MCF 10A (cell line): ENCODE measurements at regions of chr12 and their contacts with region 1.

Region 1: DNA sequence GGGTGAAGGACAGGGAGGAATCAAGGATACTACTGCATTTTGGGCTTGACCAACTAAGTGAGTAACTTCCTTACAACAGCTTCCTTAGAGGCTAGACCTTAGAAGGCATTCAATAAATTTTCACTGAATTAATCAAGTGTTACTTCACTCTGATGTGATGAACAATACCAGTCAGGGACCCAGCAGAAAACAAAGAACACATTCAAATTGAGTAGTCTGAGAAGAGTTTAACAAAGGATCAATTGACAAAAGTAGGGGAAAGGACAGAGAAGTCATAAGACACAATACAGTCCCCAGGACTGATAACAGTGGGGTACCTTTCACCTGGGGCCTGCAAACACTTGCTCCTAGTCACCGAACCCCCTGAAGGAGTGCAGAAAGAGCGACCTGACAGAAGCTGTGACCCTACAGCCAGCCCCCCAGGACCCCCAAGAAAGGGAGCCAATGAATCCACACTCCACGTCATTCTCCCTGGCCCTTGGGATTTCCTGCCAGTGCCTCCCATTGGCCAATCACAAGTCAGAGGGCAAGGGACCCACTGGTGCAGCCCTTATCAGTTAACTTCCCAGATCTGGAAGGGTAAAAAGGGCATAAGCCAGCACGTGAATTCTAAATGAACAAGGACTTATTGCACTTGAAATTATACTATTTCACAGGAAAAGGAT is 6.9 kb downstream of the ANAPC5 start:
- DNase-seq: no peak
- H3K4me3 Mint-ChIP-seq: no peak overlapping the region
- H3K27ac Mint-ChIP-seq: no peak overlapping the region
- H3K4me1 Mint-ChIP-seq: no peaks in the 10 kb centered on the region
- H3K27me3 Mint-ChIP-seq: no peaks in the 10 kb centered on the region
- CTCF ChIP-seq: no peak

Region 2: GRCh38 chr12:120971299-120972179 is 373.7 kb before region 1 on chr12:
- CTCF ChIA-PET with region 1: no interaction called
- POLR2A ChIA-PET with region 1: no interaction called
- intact Hi-C with region 1: no loop called
- DNase-seq: peak; percentile 69
- H3K4me3 Mint-ChIP-seq: no peak overlapping the region
- H3K27ac Mint-ChIP-seq: no peak overlapping the region
- H3K4me1 Mint-ChIP-seq: peaks cover 8% of the 10 kb centered on the region
- H3K27me3 Mint-ChIP-seq: no peaks in the 10 kb centered on the region
- CTCF ChIP-seq: peak; percentile 73

Region 3: DNA sequence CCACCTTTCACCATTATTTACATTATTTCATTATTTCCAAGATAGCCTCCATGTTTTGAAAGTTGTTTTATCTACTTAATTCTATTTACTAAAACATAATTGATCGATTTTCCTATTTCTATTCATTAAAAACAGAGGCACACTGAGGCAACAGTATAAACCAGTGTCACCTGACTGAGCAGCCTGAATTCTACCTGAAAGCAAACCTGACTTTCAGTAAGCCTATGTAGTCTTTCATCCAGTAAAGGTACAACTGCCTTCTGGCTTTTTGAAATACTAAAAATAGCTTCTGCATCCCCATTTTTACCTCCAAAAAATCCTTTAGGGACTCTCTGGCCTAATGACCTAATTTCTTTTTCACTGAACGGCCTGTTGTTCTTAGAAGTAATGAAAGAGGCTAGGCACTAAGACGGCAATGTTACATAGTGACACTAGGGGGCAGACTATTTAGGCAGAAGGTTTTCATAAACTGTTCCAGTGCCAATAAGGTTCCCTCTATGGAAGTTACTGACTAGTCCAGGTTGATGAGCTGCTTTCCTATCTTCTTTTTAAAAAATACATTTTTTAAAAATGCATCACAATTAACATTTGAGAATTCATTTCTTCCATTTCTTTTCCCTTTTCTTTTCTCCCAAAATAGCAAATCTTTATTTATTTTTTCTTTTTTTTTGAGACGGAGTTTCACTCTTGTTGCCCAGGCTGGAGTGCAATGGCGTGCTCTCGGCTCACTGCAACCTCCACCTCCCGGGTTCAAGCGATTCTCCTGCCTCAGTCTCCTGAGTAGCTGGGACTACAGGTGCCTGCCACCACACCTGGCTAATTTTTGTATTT is 10.6 kb before region 1 on chr12:
- CTCF ChIA-PET with region 1: interaction called, 66 read pairs
- POLR2A ChIA-PET with region 1: no interaction called
- intact Hi-C with region 1: no loop called
- DNase-seq: peak; percentile 66
- H3K4me3 Mint-ChIP-seq: no peak overlapping the region
- H3K27ac Mint-ChIP-seq: no peak overlapping the region
- H3K4me1 Mint-ChIP-seq: no peaks in the 10 kb centered on the region
- H3K27me3 Mint-ChIP-seq: no peaks in the 10 kb centered on the region
- CTCF ChIP-seq: peak; percentile 67

Region 4: DNA sequence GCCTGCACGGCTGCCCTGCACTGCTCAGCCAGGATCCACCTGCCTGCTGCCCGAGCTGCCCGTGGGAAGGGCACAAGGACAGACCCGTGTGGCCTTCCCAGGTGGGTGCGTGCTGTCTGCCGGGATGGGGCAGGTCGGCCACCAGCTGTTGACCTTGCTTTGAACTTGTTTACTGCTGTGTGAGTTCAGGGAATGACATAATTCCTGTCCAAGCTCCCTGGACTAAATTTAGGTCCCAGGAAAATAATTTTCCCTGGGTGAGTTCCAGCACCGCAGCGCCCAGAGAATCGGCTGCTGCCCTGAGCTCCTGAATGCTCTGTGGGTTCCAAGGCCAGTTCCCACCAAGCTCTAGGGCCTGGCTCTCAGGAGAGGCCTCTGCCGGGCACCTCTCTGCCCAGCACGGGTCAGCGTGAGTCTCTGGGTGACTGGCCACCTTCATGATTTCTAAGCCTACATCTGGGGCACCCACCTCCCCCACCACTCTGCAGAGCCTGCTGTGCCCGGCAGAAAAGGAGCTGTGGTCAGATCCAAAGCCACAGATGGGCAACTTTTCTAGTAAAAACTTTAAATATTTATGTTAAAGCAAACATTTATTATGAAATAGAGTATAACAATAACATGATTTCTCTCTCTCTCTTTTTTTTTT is 706.1 kb after region 1 on chr12:
- CTCF ChIA-PET with region 1: no interaction called
- POLR2A ChIA-PET with region 1: no interaction called
- intact Hi-C with region 1: no loop called
- DNase-seq: no peak
- H3K4me3 Mint-ChIP-seq: no peak overlapping the region
- H3K27ac Mint-ChIP-seq: no peak overlapping the region
- H3K4me1 Mint-ChIP-seq: no peaks in the 10 kb centered on the region
- H3K27me3 Mint-ChIP-seq: no peaks in the 10 kb centered on the region
- CTCF ChIP-seq: no peak